Right ventricle myocardium inferior (tissue), 1 donor: ENCODE measurements at regions of chr3 and their contacts with region 1.

Region 1: DNA sequence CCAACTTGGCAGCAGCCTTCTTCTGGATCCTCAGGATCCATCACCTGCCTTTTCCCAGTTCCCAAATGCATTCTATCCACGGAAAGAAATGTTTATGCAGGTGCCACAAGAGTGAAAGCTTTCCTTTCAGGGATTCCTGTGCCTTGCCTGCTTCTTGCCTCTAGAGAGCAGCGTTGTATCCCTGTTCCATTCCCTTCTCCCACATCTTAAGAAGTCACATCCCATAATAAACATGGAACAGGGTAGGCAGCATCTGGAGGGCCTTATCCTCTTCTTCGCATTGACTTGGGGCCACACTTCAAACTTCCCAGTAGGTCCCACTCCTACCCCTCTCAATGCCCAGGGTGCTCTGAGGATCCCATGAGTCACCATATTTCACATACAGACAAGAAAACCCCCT is 72.7 kb upstream of the DCLK3 start:
- DNase-seq: no peak
- ATAC-seq: no peak

Region 2: GRCh38 chr3:36763850-36764703 is 73.0 kb before region 1 on chr3 and contains the start of gene DCLK3:
- intact Hi-C with region 1: loop called (anchors 10 kb)
- DNase-seq: no peak
- ATAC-seq: peak; percentile 28
- total RNA-seq, gene DCLK3: 0.41 TPM

Region 3: GRCh38 chr3:37024092-37024491 is 187.0 kb after region 1 on chr3:
- intact Hi-C with region 1: no loop called
- DNase-seq: no peak
- ATAC-seq: no peak